CD4-positive, alpha-beta memory T cell (primary cell): ENCODE measurements at regions of chr1 and their contacts with region 1.

Region 1: DNA sequence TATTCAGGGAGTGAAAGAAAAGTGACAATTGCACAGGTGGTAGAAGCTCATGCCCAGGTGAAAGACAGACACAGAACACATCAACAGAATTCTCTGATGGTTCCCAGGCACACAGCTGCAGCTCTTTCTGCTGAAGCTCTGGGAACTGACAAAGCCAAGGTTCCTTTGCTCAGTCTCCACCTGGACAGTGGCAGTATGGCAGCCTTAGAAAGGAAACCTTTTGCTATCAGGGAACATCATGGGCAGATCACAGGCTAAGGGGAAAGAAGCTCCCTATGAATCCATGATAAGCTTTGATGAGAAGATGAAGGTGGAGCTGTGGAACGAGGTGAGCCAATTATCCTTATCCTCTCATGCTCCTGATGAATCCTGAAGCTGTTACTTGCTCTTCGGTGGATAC is 1.2 kb downstream of the SPRR2B start:
- DNase-seq: peak in 1 of 5 donors; percentile 25
- H3K4me3 ChIP-seq: no peak overlapping the region
- H3K4me3 Mint-ChIP-seq: no peak overlapping the region
- H3K27ac ChIP-seq: no peak overlapping the region
- H3K27ac Mint-ChIP-seq: no peak overlapping the region
- H3K4me1 ChIP-seq: no peaks in the 10 kb centered on the region
- H3K4me1 Mint-ChIP-seq: no peaks in the 10 kb centered on the region
- H3K27me3 ChIP-seq: no peaks in the 10 kb centered on the region
- H3K27me3 Mint-ChIP-seq: peaks cover 9 to 14% of the 10 kb centered on the region in 2 donors

Region 2: GRCh38 chr1:152869808-152870419 is 200.3 kb before region 1 on chr1:
- CTCF ChIA-PET with region 1: no interaction called
- POLR2A ChIA-PET with region 1: no interaction called
- intact Hi-C with region 1: no loop called
- DNase-seq: peak; percentile 31 to 50 (median 38)
- H3K4me3 ChIP-seq: no peak overlapping the region
- H3K4me3 Mint-ChIP-seq: no peak overlapping the region
- H3K27ac ChIP-seq: no peak overlapping the region
- H3K27ac Mint-ChIP-seq: no peak overlapping the region
- H3K4me1 ChIP-seq: no peaks in the 10 kb centered on the region
- H3K4me1 Mint-ChIP-seq: peaks cover 0 to 1% (median 0%) of the 10 kb centered on the region in 4 donors
- H3K27me3 ChIP-seq: no peaks in the 10 kb centered on the region
- H3K27me3 Mint-ChIP-seq: peaks cover 5 to 6% of the 10 kb centered on the region in 2 donors

Region 3: GRCh38 chr1:153058826-153059784 is 11.1 kb before region 1 on chr1:
- CTCF ChIA-PET with region 1: no interaction called
- POLR2A ChIA-PET with region 1: no interaction called
- intact Hi-C with region 1: no loop called
- DNase-seq: no peak
- H3K4me3 ChIP-seq: no peak overlapping the region
- H3K4me3 Mint-ChIP-seq: no peak overlapping the region
- H3K27ac ChIP-seq: no peak overlapping the region
- H3K27ac Mint-ChIP-seq: no peak overlapping the region
- H3K4me1 ChIP-seq: no peaks in the 10 kb centered on the region
- H3K4me1 Mint-ChIP-seq: no peaks in the 10 kb centered on the region
- H3K27me3 ChIP-seq: no peaks in the 10 kb centered on the region
- H3K27me3 Mint-ChIP-seq: peaks cover 9 to 16% of the 10 kb centered on the region in 2 donors

Region 4: DNA sequence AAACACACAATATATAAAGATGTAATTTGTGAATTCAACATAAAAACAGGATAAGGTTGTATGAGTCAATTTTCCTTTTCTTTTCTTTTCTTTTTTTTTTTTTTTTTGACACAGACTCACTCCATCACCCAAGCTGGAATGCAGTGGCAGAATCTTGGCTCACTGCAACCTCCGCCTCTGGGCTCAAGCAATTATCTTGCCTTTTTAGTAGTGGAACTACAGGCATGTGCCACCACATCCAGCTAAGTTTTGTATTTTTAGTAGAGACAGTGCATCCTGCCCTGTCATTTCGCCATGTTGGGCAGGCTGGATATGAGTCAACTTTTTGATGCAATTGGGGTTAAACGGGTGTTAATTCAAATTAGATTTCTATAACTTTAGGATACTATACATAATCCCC is 11.5 kb after region 1 on chr1:
- CTCF ChIA-PET with region 1: no interaction called
- POLR2A ChIA-PET with region 1: no interaction called
- intact Hi-C with region 1: no loop called
- DNase-seq: no peak
- H3K4me3 ChIP-seq: no peak overlapping the region
- H3K4me3 Mint-ChIP-seq: no peak overlapping the region
- H3K27ac ChIP-seq: no peak overlapping the region
- H3K27ac Mint-ChIP-seq: no peak overlapping the region
- H3K4me1 ChIP-seq: no peaks in the 10 kb centered on the region
- H3K4me1 Mint-ChIP-seq: no peaks in the 10 kb centered on the region
- H3K27me3 ChIP-seq: no peaks in the 10 kb centered on the region
- H3K27me3 Mint-ChIP-seq: peaks cover 14 to 18% of the 10 kb centered on the region in 2 donors

Region 5: GRCh38 chr1:153094426-153094825 is 24.2 kb after region 1 on chr1 and contains the start of gene SPRR2E:
- CTCF ChIA-PET with region 1: no interaction called
- POLR2A ChIA-PET with region 1: no interaction called
- intact Hi-C with region 1: loop called (anchors 1 kb)
- DNase-seq: no peak
- H3K4me3 ChIP-seq: no peak within 1 kb of the TSS
- H3K4me3 Mint-ChIP-seq: no peak within 1 kb of the TSS
- H3K27ac ChIP-seq: no peak within 1 kb of the TSS
- H3K27ac Mint-ChIP-seq: no peak within 1 kb of the TSS
- H3K4me1 ChIP-seq: no peaks in the 10 kb centered on the region
- H3K4me1 Mint-ChIP-seq: no peaks in the 10 kb centered on the region
- H3K27me3 ChIP-seq: peaks cover 8% of the 10 kb centered on the region
- H3K27me3 Mint-ChIP-seq: peaks cover 7 to 10% of the 10 kb centered on the region in 2 donors
- total RNA-seq, gene SPRR2E: not detected

Region 6: DNA sequence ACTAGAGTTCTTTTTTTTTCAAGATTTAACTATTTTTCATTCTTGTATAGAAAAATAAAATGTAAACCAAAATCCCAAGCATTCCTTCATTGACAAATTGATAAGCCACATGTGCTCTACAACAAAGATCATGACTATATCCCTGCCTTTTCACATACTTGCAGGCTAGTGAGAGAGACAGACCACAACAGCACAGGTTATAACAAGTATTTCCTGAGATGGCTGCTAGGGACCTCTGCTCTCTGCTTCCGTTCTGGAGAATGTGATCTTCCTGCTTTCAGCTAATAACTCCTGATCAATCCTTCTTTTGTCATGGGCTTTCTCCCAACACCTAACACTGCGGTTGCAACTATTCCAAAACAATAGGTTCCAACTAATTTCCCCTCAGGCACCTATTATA is 57.1 kb after region 1 on chr1:
- CTCF ChIA-PET with region 1: no interaction called
- POLR2A ChIA-PET with region 1: no interaction called
- intact Hi-C with region 1: no loop called
- DNase-seq: no peak
- H3K4me3 ChIP-seq: no peak overlapping the region
- H3K4me3 Mint-ChIP-seq: no peak overlapping the region
- H3K27ac ChIP-seq: no peak overlapping the region
- H3K27ac Mint-ChIP-seq: no peak overlapping the region
- H3K4me1 ChIP-seq: no peaks in the 10 kb centered on the region
- H3K4me1 Mint-ChIP-seq: no peaks in the 10 kb centered on the region
- H3K27me3 ChIP-seq: peaks cover 6% of the 10 kb centered on the region
- H3K27me3 Mint-ChIP-seq: peaks cover 7 to 8% of the 10 kb centered on the region in 2 donors